Activated T-helper 1 cell treated with anti-CD3 and anti-CD28 coated beads, Interleukin-12 subunit alpha, Interleukin-12 subunit beta, Interleukin-2, Interleukin-4 antibody, amounts not matched to agents 30 ng/mL and 10 ng/mL and 1 ng/mL, durations not matched to agents 14 hours and 24 hours and 36 hours (primary cell): ENCODE measurements at regions of chr12 and their contacts with region 1.

Region 1: DNA sequence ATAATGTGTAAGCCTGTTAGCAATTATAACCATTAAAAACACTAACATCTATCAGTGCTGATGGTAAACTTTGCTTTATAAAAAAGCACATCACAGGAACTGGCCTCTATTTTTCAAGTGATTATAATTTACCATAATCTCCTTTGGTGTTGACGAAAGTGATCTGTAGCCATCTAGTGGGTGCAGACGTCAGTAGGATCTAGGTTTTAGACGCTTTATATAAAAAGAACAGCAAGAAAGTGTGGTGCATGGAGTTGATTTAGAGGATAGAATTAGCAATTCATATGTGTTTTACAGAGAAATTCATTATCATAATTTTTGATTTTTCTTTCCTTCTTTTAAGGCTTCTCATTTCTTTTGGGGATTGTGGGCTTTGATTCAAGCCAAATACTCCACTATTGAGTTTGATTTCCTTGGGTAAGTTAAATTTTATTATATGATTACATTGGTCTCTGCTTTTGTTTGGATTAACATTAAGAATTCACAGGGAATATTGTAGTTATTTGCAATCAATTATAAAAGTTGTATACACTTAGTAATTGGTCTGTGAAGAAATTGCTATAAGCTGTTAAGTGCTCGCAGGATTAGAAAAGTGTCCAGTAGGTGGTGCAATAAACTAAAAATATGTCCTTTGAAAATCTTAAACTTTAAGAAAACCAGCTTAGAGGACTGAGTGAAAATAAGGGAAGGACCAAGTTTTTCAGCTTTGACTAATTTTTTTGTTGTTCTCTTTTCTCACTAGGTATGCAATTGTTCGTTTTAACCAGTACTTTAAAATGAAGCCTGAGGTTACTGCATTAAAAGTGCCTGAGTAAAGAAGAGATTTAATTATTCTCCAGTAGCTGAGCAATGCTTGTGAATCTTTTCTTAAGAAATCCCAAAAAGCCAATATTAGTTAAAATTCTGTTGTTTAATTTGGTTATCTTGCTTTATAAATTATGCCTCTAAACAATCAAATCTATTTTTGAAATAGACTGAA is 59.5 kb downstream of the ETNK1 start:
- DNase-seq: no peak
- H3K4me3 Mint-ChIP-seq: no peak overlapping the region
- H3K27ac Mint-ChIP-seq: no peak overlapping the region
- H3K4me1 Mint-ChIP-seq: peaks cover 24% of the 10 kb centered on the region
- H3K27me3 Mint-ChIP-seq: no peaks in the 10 kb centered on the region

Region 2: GRCh38 chr12:22046090-22046967 is 638.1 kb before region 1 on chr12 and contains the start of gene CMAS:
- intact Hi-C with region 1: loop called (anchors 10 kb)
- DNase-seq: peak; percentile 70
- H3K4me3 Mint-ChIP-seq: peak within 1 kb of the TSS; percentile 95
- H3K27ac Mint-ChIP-seq: peak within 1 kb of the TSS; percentile 88
- H3K4me1 Mint-ChIP-seq: peaks cover 48% of the 10 kb centered on the region
- H3K27me3 Mint-ChIP-seq: no peaks in the 10 kb centered on the region
- total RNA-seq, gene CMAS: 34.1 and 34.9 TPM in 2 replicates

Region 3: GRCh38 chr12:22275846-22276245 is 408.6 kb before region 1 on chr12:
- intact Hi-C with region 1: no loop called
- DNase-seq: no peak
- H3K4me3 Mint-ChIP-seq: no peak overlapping the region
- H3K27ac Mint-ChIP-seq: no peak overlapping the region
- H3K4me1 Mint-ChIP-seq: no peaks in the 10 kb centered on the region
- H3K27me3 Mint-ChIP-seq: peaks cover 1% of the 10 kb centered on the region

Region 4: GRCh38 chr12:22700106-22700505 is 15.7 kb after region 1 on chr12:
- intact Hi-C with region 1: no loop called
- DNase-seq: no peak
- H3K4me3 Mint-ChIP-seq: no peak overlapping the region
- H3K27ac Mint-ChIP-seq: no peak overlapping the region
- H3K4me1 Mint-ChIP-seq: no peaks in the 10 kb centered on the region
- H3K27me3 Mint-ChIP-seq: peaks cover 21% of the 10 kb centered on the region

Region 5: DNA sequence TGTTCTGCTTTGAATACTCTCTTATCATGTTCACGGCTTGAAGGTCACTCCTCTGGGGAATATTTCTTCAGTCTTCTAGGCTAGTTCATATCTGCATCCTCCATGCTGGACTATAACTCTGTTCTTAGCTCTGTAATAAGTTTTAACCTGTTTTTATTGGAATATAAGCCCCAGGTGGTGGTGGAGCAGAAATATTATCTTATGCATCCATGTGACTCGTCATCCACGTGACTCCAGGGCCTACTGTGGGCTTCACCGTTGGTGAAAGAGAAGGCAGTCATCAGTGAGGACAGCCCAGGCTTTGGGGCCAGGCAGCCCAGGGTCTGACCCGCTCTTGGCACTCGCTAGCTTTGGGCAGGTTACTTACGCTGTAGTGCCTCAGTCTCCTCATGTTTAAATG is 27.7 kb after region 1 on chr12:
- intact Hi-C with region 1: no loop called
- DNase-seq: no peak
- H3K4me3 Mint-ChIP-seq: no peak overlapping the region
- H3K27ac Mint-ChIP-seq: no peak overlapping the region
- H3K4me1 Mint-ChIP-seq: no peaks in the 10 kb centered on the region
- H3K27me3 Mint-ChIP-seq: peaks cover 11% of the 10 kb centered on the region

Region 6: GRCh38 chr12:22856178-22856577 is 171.7 kb after region 1 on chr12:
- intact Hi-C with region 1: loop called (anchors 5 kb)
- DNase-seq: no peak
- H3K4me3 Mint-ChIP-seq: no peak overlapping the region
- H3K27ac Mint-ChIP-seq: no peak overlapping the region
- H3K4me1 Mint-ChIP-seq: no peaks in the 10 kb centered on the region
- H3K27me3 Mint-ChIP-seq: peaks cover 2% of the 10 kb centered on the region

Region 7: GRCh38 chr12:23204933-23205778 is 520.7 kb after region 1 on chr12:
- intact Hi-C with region 1: loop called (anchors 5 kb)
- DNase-seq: no peak
- H3K4me3 Mint-ChIP-seq: no peak overlapping the region
- H3K27ac Mint-ChIP-seq: no peak overlapping the region
- H3K4me1 Mint-ChIP-seq: no peaks in the 10 kb centered on the region
- H3K27me3 Mint-ChIP-seq: no peaks in the 10 kb centered on the region